ENCODE measurements at regions of chr9 and their contacts with region 1.

Region 1: DNA sequence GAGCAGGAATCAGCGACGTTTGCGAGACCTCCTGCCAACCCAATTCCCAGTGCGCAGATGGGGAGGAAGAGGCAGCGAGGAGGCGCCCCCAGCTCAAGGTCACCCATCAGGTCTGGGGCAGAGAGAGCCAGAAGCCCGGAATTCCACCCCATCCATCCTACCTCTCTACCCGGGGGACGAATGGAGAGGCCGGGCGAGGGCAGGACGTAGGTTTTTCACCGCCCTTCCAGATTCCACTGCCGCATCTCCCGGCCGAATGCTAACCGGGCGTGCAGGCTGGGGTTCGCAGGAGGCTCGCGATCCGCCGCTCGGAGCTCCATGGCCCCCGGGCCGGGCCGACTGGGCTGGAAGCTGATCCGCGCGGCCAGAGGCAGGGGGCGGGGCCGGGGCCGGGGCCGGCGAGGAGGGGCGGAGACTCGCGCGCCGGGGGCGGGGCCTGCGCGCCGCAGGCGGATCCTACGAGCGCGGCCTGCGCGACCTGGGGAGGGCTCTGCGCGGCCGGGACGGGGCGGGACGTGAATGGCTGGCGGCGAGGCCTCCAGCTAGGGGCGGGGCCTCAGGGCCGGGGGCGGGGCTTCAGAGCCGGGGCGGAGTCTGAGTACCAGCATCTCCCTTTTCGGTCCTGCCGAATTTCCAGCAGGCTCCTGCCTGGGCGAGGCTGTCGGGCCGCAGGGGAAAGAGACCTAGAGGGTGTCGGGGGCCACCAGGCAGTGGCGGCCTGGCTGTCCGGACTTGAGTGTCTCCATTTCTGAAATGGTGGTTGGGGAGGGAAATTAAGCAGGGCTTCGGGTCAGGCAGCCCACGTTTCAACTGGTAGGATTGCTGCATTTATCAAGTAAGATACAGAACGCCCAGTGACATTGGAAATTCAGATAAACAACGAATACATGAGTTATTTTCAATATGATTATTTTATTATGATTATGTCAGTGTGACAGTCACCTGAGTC is at the start of gene ST6GALNAC4:
- DNase-seq: peak; percentile 90 to 98 (median 95)
- ATAC-seq: peak; percentile 94
- H3K4me3 ChIP-seq: peak within 1 kb of the TSS; percentile 70 to 89
- H3K4me3 Mint-ChIP-seq: peak within 1 kb of the TSS; percentile 89
- H3K27ac ChIP-seq: peak within 1 kb of the TSS; percentile 62 to 72
- H3K27ac Mint-ChIP-seq: peak within 1 kb of the TSS; percentile 92
- H3K4me1 ChIP-seq: peaks cover 46% of the 10 kb centered on the region
- H3K4me1 Mint-ChIP-seq: peaks cover 54% of the 10 kb centered on the region
- H3K27me3 ChIP-seq: peaks cover 0 to 3% of the 10 kb centered on the region in 2 experiments
- H3K27me3 Mint-ChIP-seq: no peaks in the 10 kb centered on the region
- CTCF ChIP-seq: no peak
- total RNA-seq, gene ST6GALNAC4: 40.0 to 47.6 TPM

Region 2: GRCh38 chr9:127311239-127311741 is 605.6 kb before region 1 on chr9:
- CTCF ChIA-PET with region 1: no interaction called
- POLR2A ChIA-PET with region 1: no interaction called
- intact Hi-C with region 1: loop called in 1 of 2 experiments (anchors 5 kb)
- DNase-seq: peak in 7 of 9 experiments; percentile 6 to 57 (median 40)
- ATAC-seq: no peak
- H3K4me3 ChIP-seq: no peak overlapping the region
- H3K4me3 Mint-ChIP-seq: no peak overlapping the region
- H3K27ac ChIP-seq: no peak overlapping the region
- H3K27ac Mint-ChIP-seq: no peak overlapping the region
- H3K4me1 ChIP-seq: no peaks in the 10 kb centered on the region
- H3K4me1 Mint-ChIP-seq: no peaks in the 10 kb centered on the region
- H3K27me3 ChIP-seq: no peaks in the 10 kb centered on the region
- H3K27me3 Mint-ChIP-seq: peaks cover 25% of the 10 kb centered on the region
- CTCF ChIP-seq: no peak

Region 3: DNA sequence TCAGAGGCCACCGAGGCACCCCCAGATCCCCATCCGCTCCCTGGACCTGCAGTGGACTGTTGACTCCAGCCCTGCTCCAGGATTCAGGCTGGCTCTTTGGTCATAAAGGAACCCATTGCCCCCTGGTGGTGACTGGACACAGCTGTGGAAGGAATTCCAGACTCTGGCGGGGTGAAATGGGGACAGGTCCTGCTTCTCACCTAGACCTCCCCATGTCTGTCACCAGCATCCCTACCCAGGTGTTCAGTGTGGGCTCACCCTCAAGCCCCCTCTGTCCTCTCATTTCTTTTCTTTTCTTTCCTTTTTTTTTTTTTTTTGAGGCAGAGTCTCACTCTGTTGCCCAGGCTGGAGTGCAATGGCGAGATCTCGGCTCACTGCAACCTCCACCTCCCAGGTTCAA is 330.4 kb before region 1 on chr9:
- CTCF ChIA-PET with region 1: interaction called, 29 read pairs
- POLR2A ChIA-PET with region 1: no interaction called
- intact Hi-C with region 1: loop called (anchors 1 to 5 kb)
- DNase-seq: peak; percentile 26 to 78 (median 64)
- ATAC-seq: peak; percentile 62
- H3K4me3 ChIP-seq: no peak overlapping the region
- H3K4me3 Mint-ChIP-seq: no peak overlapping the region
- H3K27ac ChIP-seq: no peak overlapping the region
- H3K27ac Mint-ChIP-seq: no peak overlapping the region
- H3K4me1 ChIP-seq: no peaks in the 10 kb centered on the region
- H3K4me1 Mint-ChIP-seq: peaks cover 3% of the 10 kb centered on the region
- H3K27me3 ChIP-seq: no peaks in the 10 kb centered on the region
- H3K27me3 Mint-ChIP-seq: peaks cover 13% of the 10 kb centered on the region
- CTCF ChIP-seq: peak; percentile 57

Region 4: DNA sequence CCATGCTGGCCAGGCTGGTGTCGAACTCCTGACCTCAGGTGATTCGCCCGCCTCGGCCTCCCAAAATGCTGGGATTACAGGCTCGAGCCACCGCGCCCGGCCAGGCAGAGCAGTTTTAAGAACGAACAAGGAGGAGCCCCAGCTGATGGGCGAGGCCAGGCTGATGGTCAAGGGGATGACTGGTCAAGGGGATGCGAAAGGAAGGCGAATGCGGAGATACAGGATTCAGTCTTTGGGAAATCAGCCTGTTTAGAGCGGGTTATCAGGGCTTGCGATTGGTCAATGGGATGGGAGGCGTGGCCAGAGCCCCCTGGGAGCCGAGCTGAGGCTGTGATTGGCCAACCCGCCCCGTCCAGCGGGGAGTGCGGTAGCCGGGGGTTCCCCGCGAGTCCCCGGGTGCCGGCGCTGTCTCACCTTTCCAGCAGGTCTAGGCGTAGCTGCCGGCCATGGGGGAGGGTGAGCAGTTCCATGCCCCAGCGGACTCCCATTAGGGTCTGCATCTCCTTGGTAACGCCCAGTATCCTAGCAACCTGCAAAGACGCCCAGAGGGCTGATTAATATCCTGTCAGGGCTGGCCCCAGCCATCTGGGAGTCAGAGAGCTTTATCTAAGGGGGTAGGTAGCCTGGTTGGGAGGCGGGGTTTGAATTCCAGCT is 174.4 kb before region 1 on chr9:
- CTCF ChIA-PET with region 1: interaction called, 12 read pairs
- POLR2A ChIA-PET with region 1: no interaction called
- intact Hi-C with region 1: no loop called
- DNase-seq: no peak
- ATAC-seq: no peak
- H3K4me3 ChIP-seq: no peak overlapping the region
- H3K4me3 Mint-ChIP-seq: no peak overlapping the region
- H3K27ac ChIP-seq: no peak overlapping the region
- H3K27ac Mint-ChIP-seq: no peak overlapping the region
- H3K4me1 ChIP-seq: peaks cover 13% of the 10 kb centered on the region
- H3K4me1 Mint-ChIP-seq: peaks cover 15% of the 10 kb centered on the region
- H3K27me3 ChIP-seq: no peaks in the 10 kb centered on the region
- H3K27me3 Mint-ChIP-seq: no peaks in the 10 kb centered on the region
- CTCF ChIP-seq: no peak

Region 5: GRCh38 chr9:127869310-127870152 is 47.4 kb before region 1 on chr9:
- CTCF ChIA-PET with region 1: interaction called, 40 read pairs
- POLR2A ChIA-PET with region 1: interaction called, 6 read pairs
- intact Hi-C with region 1: loop called in 1 of 2 experiments (anchors 1 kb)
- DNase-seq: peak; percentile 51 to 89 (median 81)
- ATAC-seq: peak; percentile 71
- H3K4me3 ChIP-seq: no peak overlapping the region
- H3K4me3 Mint-ChIP-seq: no peak overlapping the region
- H3K27ac ChIP-seq: no peak overlapping the region
- H3K27ac Mint-ChIP-seq: no peak overlapping the region
- H3K4me1 ChIP-seq: peaks cover 17% of the 10 kb centered on the region
- H3K4me1 Mint-ChIP-seq: peaks cover 17% of the 10 kb centered on the region
- H3K27me3 ChIP-seq: no peaks in the 10 kb centered on the region
- H3K27me3 Mint-ChIP-seq: no peaks in the 10 kb centered on the region
- CTCF ChIP-seq: peak; percentile 74

Region 6: GRCh38 chr9:127904561-127905003 is 12.4 kb before region 1 on chr9:
- CTCF ChIA-PET with region 1: interaction called, 7 read pairs
- POLR2A ChIA-PET with region 1: interaction called, 22 read pairs
- intact Hi-C with region 1: loop called (anchors 1 kb)
- DNase-seq: peak in 1 of 9 experiments; percentile 29
- ATAC-seq: no peak
- H3K4me3 ChIP-seq: peak overlapping the region; percentile 58 to 62
- H3K4me3 Mint-ChIP-seq: peak overlapping the region; percentile 92
- H3K27ac ChIP-seq: peak overlapping the region; percentile 95 to 100
- H3K27ac Mint-ChIP-seq: peak overlapping the region; percentile 100
- H3K4me1 ChIP-seq: peaks cover 52% of the 10 kb centered on the region
- H3K4me1 Mint-ChIP-seq: peaks cover 53% of the 10 kb centered on the region
- H3K27me3 ChIP-seq: no peaks in the 10 kb centered on the region
- H3K27me3 Mint-ChIP-seq: no peaks in the 10 kb centered on the region
- CTCF ChIP-seq: no peak